Activated CD4-positive, alpha-beta T cell treated with anti-CD3 and anti-CD28 coated beads for 36 hours (primary cell): ENCODE measurements at regions of chr5 and their contacts with region 1.

Region 1: GRCh38 chr5:141557681-141558136 is 61.1 kb downstream of the DIAPH1 start:
- DNase-seq: peak; percentile 88
- ATAC-seq: peak; percentile 90
- H3K4me3 Mint-ChIP-seq: no peak overlapping the region
- H3K27ac Mint-ChIP-seq: peak overlapping the region; percentile 3
- H3K4me1 Mint-ChIP-seq: peaks cover 28% of the 10 kb centered on the region
- H3K27me3 Mint-ChIP-seq: no peaks in the 10 kb centered on the region

Region 2: GRCh38 chr5:141326088-141326854 is 231.4 kb before region 1 on chr5:
- CTCF ChIA-PET with region 1: interaction called, 17 read pairs
- POLR2A ChIA-PET with region 1: no interaction called
- intact Hi-C with region 1: loop called (anchors 2 to 5 kb)
- DNase-seq: peak; percentile 84
- ATAC-seq: peak; percentile 94
- H3K4me3 Mint-ChIP-seq: peak overlapping the region; percentile 72
- H3K27ac Mint-ChIP-seq: peak overlapping the region; percentile 72
- H3K4me1 Mint-ChIP-seq: peaks cover 4% of the 10 kb centered on the region
- H3K27me3 Mint-ChIP-seq: peaks cover 29% of the 10 kb centered on the region

Region 3: GRCh38 chr5:141420855-141421496 is 136.7 kb before region 1 on chr5 and contains the start of gene PCDHGA11:
- CTCF ChIA-PET with region 1: interaction called, 14 read pairs
- POLR2A ChIA-PET with region 1: no interaction called
- intact Hi-C with region 1: loop called in 1 of 2 experiments (anchors 1 kb)
- DNase-seq: peak; percentile 75
- ATAC-seq: peak; percentile 57
- H3K4me3 Mint-ChIP-seq: peak within 1 kb of the TSS; percentile 69
- H3K27ac Mint-ChIP-seq: no peak within 1 kb of the TSS
- H3K4me1 Mint-ChIP-seq: peaks cover 2% of the 10 kb centered on the region
- H3K27me3 Mint-ChIP-seq: peaks cover 70% of the 10 kb centered on the region
- total RNA-seq, gene PCDHGA11: 0.07 TPM in 1 of 2 experiments, not detected in the other

Region 4: GRCh38 chr5:141524604-141525597 is 32.8 kb before region 1 on chr5:
- CTCF ChIA-PET with region 1: interaction called, 8 read pairs
- POLR2A ChIA-PET with region 1: no interaction called
- intact Hi-C with region 1: loop called in 1 of 2 experiments (anchors 5 kb)
- DNase-seq: peak; percentile 67
- ATAC-seq: peak; percentile 62
- H3K4me3 Mint-ChIP-seq: no peak overlapping the region
- H3K27ac Mint-ChIP-seq: no peak overlapping the region
- H3K4me1 Mint-ChIP-seq: peaks cover 28% of the 10 kb centered on the region
- H3K27me3 Mint-ChIP-seq: no peaks in the 10 kb centered on the region

Region 5: GRCh38 chr5:141547488-141547887 is 10.2 kb before region 1 on chr5:
- CTCF ChIA-PET with region 1: interaction called, 21 read pairs
- POLR2A ChIA-PET with region 1: no interaction called
- intact Hi-C with region 1: no loop called
- DNase-seq: no peak
- ATAC-seq: no peak
- H3K4me3 Mint-ChIP-seq: no peak overlapping the region
- H3K27ac Mint-ChIP-seq: no peak overlapping the region
- H3K4me1 Mint-ChIP-seq: peaks cover 20% of the 10 kb centered on the region
- H3K27me3 Mint-ChIP-seq: no peaks in the 10 kb centered on the region

Region 6: GRCh38 chr5:141835928-141836670 is 278.4 kb after region 1 on chr5:
- CTCF ChIA-PET with region 1: no interaction called
- POLR2A ChIA-PET with region 1: no interaction called
- intact Hi-C with region 1: no loop called
- DNase-seq: no peak
- ATAC-seq: peak; percentile 47
- H3K4me3 Mint-ChIP-seq: no peak overlapping the region
- H3K27ac Mint-ChIP-seq: no peak overlapping the region
- H3K4me1 Mint-ChIP-seq: peaks cover 14% of the 10 kb centered on the region
- H3K27me3 Mint-ChIP-seq: no peaks in the 10 kb centered on the region